Endothelial cell of umbilical vein (primary cell): ENCODE measurements at regions of chr5 and their contacts with region 1.

Region 1: GRCh38 chr5:152505442-152506042 is 100.5 kb upstream of the NMUR2 start:
- DNase-seq: peak; percentile 37
- H3K4me3 ChIP-seq: no peak overlapping the region
- H3K27ac ChIP-seq: no peak overlapping the region
- H3K4me1 ChIP-seq: no peaks in the 10 kb centered on the region
- H3K27me3 ChIP-seq: no peaks in the 10 kb centered on the region
- CTCF ChIP-seq: peak; percentile 53 to 55
- POLR2A ChIP-seq: no peak

Region 2: GRCh38 chr5:152142840-152143469 is 362.6 kb before region 1 on chr5:
- CTCF ChIA-PET with region 1: no interaction called
- POLR2A ChIA-PET with region 1: no interaction called
- dilution Hi-C with region 1: no loop called
- intact Hi-C with region 1: loop called (anchors 5 kb)
- DNase-seq: peak; percentile 47
- H3K4me3 ChIP-seq: no peak overlapping the region
- H3K27ac ChIP-seq: no peak overlapping the region
- H3K4me1 ChIP-seq: no peaks in the 10 kb centered on the region
- H3K27me3 ChIP-seq: no peaks in the 10 kb centered on the region
- CTCF ChIP-seq: peak; percentile 76 to 94
- POLR2A ChIP-seq: no peak

Region 3: GRCh38 chr5:152379331-152379730 is 126.2 kb before region 1 on chr5:
- CTCF ChIA-PET with region 1: no interaction called
- POLR2A ChIA-PET with region 1: no interaction called
- dilution Hi-C with region 1: no loop called
- intact Hi-C with region 1: loop called (anchors 1 kb)
- DNase-seq: no peak
- H3K4me3 ChIP-seq: no peak overlapping the region
- H3K27ac ChIP-seq: no peak overlapping the region
- H3K4me1 ChIP-seq: no peaks in the 10 kb centered on the region
- H3K27me3 ChIP-seq: no peaks in the 10 kb centered on the region
- CTCF ChIP-seq: no peak
- POLR2A ChIP-seq: no peak

Region 4: GRCh38 chr5:152551061-152551460 is 45.5 kb after region 1 on chr5:
- CTCF ChIA-PET with region 1: no interaction called
- POLR2A ChIA-PET with region 1: no interaction called
- dilution Hi-C with region 1: no loop called
- intact Hi-C with region 1: no loop called
- DNase-seq: no peak
- H3K4me3 ChIP-seq: no peak overlapping the region
- H3K27ac ChIP-seq: no peak overlapping the region
- H3K4me1 ChIP-seq: no peaks in the 10 kb centered on the region
- H3K27me3 ChIP-seq: no peaks in the 10 kb centered on the region
- CTCF ChIP-seq: no peak
- POLR2A ChIP-seq: no peak